CD4-positive, alpha-beta T cell (primary cell): ENCODE measurements at regions of chr6 and their contacts with region 1.

Region 1: GRCh38 chr6:90296346-90297114 is at the start of gene BACH2:
- DNase-seq: peak; percentile 88 to 98 (median 95)
- ATAC-seq: peak; percentile 74
- H3K4me3 ChIP-seq: peak within 1 kb of the TSS; percentile 82
- H3K4me3 Mint-ChIP-seq: peak within 1 kb of the TSS; percentile 97
- H3K27ac ChIP-seq: peak within 1 kb of the TSS; percentile 52 to 89
- H3K27ac Mint-ChIP-seq: peak within 1 kb of the TSS; percentile 91
- H3K4me1 ChIP-seq: peaks cover 34% of the 10 kb centered on the region
- H3K4me1 Mint-ChIP-seq: peaks cover 45% of the 10 kb centered on the region
- H3K27me3 ChIP-seq: no peaks in the 10 kb centered on the region
- H3K27me3 Mint-ChIP-seq: peaks cover 4% of the 10 kb centered on the region
- CTCF ChIP-seq: no peak
- total RNA-seq, gene BACH2: 157 to 170 TPM

Region 2: DNA sequence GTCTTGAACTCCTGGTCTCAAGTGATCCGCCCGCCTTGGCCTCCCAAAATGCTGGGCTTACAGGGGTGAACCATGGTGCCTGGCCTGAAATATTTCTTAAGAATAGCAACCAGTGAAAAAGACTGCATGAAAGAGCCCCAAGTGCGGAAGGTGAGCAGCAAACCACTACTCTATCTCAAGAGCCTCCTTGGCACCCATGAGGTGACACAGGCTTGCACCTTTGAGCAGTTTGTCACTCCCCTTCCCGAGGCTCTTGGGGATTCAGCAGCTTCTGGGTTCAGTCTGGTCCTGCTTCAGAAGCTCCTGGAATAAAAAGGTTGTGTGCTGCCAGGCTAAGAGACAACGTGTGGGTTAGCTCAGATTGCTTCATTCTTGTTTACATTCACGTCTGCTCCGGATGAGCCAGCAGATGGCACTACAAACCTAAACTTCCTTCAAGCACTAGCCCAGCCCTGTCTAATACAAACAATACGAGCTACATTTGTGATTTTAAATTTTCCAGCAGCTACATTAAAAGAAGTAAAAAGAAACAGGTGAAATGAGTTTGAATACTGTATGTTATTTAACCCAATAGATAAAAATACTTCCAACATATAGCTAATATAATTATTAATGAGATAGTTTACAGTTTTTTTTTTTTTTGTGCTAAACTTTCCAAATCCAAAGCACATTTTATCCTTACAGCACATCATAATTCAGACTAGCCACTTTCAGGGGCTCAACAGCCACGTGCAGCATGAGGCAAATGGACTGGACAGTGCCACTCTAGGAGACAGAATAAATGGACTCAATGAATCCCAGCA is 356.1 kb before region 1 on chr6:
- CTCF ChIA-PET with region 1: no interaction called
- POLR2A ChIA-PET with region 1: interaction called, 5 read pairs
- intact Hi-C with region 1: loop called in 1 of 2 experiments (anchors 5 kb)
- DNase-seq: peak; percentile 47 to 87 (median 65)
- ATAC-seq: peak; percentile 95
- H3K4me3 ChIP-seq: no peak overlapping the region
- H3K4me3 Mint-ChIP-seq: no peak overlapping the region
- H3K27ac ChIP-seq: no peak overlapping the region
- H3K27ac Mint-ChIP-seq: peak overlapping the region; percentile 67
- H3K4me1 ChIP-seq: peaks cover 8% of the 10 kb centered on the region
- H3K4me1 Mint-ChIP-seq: peaks cover 41% of the 10 kb centered on the region
- H3K27me3 ChIP-seq: no peaks in the 10 kb centered on the region
- H3K27me3 Mint-ChIP-seq: no peaks in the 10 kb centered on the region
- CTCF ChIP-seq: peak; percentile 89

Region 3: DNA sequence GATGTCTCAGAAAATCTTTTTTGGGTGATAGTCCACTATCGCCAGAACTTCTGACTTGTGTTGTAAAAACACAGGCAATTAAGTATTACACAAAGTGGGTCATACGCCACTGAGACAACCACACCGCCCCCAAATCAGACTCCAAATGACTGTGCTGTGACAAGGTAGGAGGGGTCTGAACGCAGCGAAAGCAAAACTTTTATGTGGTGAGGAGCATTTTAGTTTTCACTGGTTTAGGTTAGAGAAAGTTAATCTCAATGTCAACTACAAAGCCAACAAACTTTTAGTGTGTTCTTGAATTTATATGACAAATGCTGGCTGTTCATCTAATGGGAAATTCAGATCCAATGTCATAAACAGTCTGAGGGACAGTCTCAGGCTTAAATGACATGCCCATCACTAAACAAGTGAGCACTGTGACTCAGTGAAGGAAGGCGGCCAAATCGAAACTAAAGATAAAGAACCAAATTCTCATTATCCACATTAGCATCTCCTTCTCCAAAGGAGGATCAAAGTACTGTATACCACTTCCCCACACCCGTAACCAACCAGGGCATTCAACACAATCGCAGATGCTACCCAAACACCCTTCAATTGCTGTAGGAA is 215.6 kb before region 1 on chr6:
- CTCF ChIA-PET with region 1: no interaction called
- POLR2A ChIA-PET with region 1: interaction called, 11 read pairs
- intact Hi-C with region 1: loop called (anchors 2 to 5 kb)
- DNase-seq: peak; percentile 31 to 85 (median 54)
- ATAC-seq: peak; percentile 80
- H3K4me3 ChIP-seq: peak overlapping the region; percentile 52
- H3K4me3 Mint-ChIP-seq: peak overlapping the region; percentile 93
- H3K27ac ChIP-seq: peak overlapping the region; percentile 57 to 68
- H3K27ac Mint-ChIP-seq: peak overlapping the region; percentile 92
- H3K4me1 ChIP-seq: peaks cover 35% of the 10 kb centered on the region
- H3K4me1 Mint-ChIP-seq: peaks cover 98% of the 10 kb centered on the region
- H3K27me3 ChIP-seq: no peaks in the 10 kb centered on the region
- H3K27me3 Mint-ChIP-seq: no peaks in the 10 kb centered on the region
- CTCF ChIP-seq: no peak

Region 4: DNA sequence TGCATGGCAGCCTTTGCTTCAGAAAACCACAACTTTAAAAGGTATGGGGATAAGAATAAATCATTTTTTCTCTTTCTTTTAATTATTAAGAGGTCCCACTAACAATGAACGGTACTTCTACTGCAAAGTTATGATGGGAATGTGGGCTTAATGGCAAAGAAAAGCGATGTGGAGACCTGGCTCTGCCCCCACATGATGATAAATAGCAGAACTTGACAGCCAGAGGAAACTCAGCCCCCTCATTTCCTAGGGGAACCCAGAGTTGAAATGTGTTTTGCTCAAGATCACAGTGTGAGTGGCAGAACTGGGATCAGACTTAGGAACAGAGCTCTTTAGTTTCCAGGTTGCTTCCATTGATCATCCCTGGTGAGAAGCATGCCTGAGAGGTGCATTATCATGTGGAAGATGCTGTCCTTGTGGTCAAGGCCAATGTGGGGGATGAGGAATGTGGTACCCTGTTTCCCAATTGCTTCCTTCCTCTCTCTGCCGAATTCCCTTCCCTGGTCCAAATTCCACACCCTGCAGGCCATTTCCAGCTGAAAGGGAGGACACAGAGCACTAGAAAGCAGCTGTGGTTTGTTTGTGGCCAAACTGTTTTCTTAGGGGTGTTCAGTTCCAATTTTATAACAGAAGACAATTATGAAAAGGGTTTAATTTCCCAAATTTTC is 65.8 kb before region 1 on chr6:
- CTCF ChIA-PET with region 1: no interaction called
- POLR2A ChIA-PET with region 1: interaction called, 10 read pairs
- intact Hi-C with region 1: no loop called
- DNase-seq: no peak
- ATAC-seq: no peak
- H3K4me3 ChIP-seq: no peak overlapping the region
- H3K4me3 Mint-ChIP-seq: peak overlapping the region; percentile 40
- H3K27ac ChIP-seq: peak overlapping the region in 1 of 2 donors; percentile 80
- H3K27ac Mint-ChIP-seq: peak overlapping the region; percentile 96
- H3K4me1 ChIP-seq: peaks cover 46% of the 10 kb centered on the region
- H3K4me1 Mint-ChIP-seq: peaks cover 97% of the 10 kb centered on the region
- H3K27me3 ChIP-seq: no peaks in the 10 kb centered on the region
- H3K27me3 Mint-ChIP-seq: no peaks in the 10 kb centered on the region
- CTCF ChIP-seq: no peak

Region 5: GRCh38 chr6:90285611-90286381 is 10.7 kb before region 1 on chr6:
- CTCF ChIA-PET with region 1: interaction called, 12 read pairs
- POLR2A ChIA-PET with region 1: interaction called, 60 read pairs
- intact Hi-C with region 1: loop called in 1 of 2 experiments (anchors 1 kb)
- DNase-seq: peak in 11 of 14 experiments; percentile 21 to 79 (median 45)
- ATAC-seq: peak; percentile 47
- H3K4me3 ChIP-seq: peak overlapping the region; percentile 54
- H3K4me3 Mint-ChIP-seq: peak overlapping the region; percentile 83
- H3K27ac ChIP-seq: peak overlapping the region; percentile 12 to 80
- H3K27ac Mint-ChIP-seq: peak overlapping the region; percentile 91
- H3K4me1 ChIP-seq: peaks cover 38% of the 10 kb centered on the region
- H3K4me1 Mint-ChIP-seq: peaks cover 93% of the 10 kb centered on the region
- H3K27me3 ChIP-seq: no peaks in the 10 kb centered on the region
- H3K27me3 Mint-ChIP-seq: no peaks in the 10 kb centered on the region
- CTCF ChIP-seq: no peak

Region 6: GRCh38 chr6:90393232-90393884 is 96.8 kb after region 1 on chr6:
- CTCF ChIA-PET with region 1: interaction called, 4 read pairs
- POLR2A ChIA-PET with region 1: interaction called, 21 read pairs
- intact Hi-C with region 1: loop called (anchors 2 to 5 kb)
- DNase-seq: peak; percentile 54 to 86 (median 61)
- ATAC-seq: peak; percentile 73
- H3K4me3 ChIP-seq: no peak overlapping the region
- H3K4me3 Mint-ChIP-seq: no peak overlapping the region
- H3K27ac ChIP-seq: no peak overlapping the region
- H3K27ac Mint-ChIP-seq: peak overlapping the region; percentile 6
- H3K4me1 ChIP-seq: peaks cover 22% of the 10 kb centered on the region
- H3K4me1 Mint-ChIP-seq: peaks cover 34% of the 10 kb centered on the region
- H3K27me3 ChIP-seq: no peaks in the 10 kb centered on the region
- H3K27me3 Mint-ChIP-seq: no peaks in the 10 kb centered on the region
- CTCF ChIP-seq: peak; percentile 81